Left cardiac atrium (tissue), 4 donors: ENCODE measurements at regions of chr3 and their contacts with region 1.

Region 1: DNA sequence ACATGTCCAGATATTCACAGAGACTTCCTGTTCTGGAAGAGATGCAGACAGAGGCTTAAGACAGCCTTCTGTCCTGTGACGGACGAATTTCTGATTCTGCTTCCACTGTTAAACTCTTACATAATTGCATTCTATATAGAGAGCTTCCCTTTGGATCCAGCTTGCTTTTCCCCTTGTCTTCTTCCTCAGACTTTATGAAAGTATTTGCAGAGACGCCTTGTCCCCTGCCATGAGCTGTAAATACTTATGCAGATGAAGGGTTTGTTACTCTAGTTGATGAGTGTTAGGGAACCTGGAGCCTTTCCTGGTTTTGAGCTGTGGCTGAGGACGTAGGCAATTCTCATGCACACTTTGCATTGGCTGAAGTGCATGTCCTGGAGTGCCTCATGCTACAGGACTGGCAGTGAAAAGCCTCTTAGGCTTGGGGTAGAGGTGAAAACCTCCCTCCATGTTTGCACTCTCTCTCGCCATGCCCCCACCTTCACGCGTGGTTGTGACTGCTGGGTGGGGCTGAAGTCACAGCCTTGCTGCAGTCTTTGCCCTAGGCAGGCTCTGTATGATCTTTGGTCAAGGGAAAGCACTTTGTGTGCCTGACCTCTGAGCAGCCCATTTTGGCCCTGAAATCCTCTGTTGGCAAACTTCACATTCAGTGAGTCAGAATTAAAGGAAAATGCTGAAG is 286.6 kb downstream of the PTPRG start:
- DNase-seq: peak; percentile 77
- ATAC-seq: peak; percentile 83 to 92

Region 2: GRCh38 chr3:61809879-61810278 is 38.0 kb before region 1 on chr3:
- intact Hi-C with region 1: loop called in 1 of 2 experiments (anchors 5 kb)
- DNase-seq: peak; percentile 65
- ATAC-seq: peak; percentile 79 to 86